ENCODE measurements at regions of chr18 and their contacts with region 1.

Region 1: DNA sequence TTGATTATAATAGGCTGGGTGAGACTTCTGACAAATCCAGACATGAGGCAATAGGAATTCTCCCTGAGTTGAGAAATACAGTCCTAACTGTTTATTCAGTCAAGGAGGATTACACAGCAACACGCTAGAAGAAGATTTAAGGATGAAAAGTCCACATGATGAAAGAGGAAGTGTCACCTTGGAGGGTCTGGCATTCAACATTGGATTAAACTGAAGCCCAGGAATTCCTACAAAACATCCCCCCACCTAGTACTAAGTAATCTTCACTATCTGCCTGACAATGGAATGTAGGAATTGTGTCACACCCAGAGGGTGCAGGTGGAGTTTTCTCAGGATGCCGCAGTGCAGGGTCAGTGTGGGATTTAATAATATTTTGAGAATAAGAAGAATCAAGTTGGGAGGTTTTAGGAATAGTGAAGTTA is 142.4 kb downstream of the SOCS6 start:
- H3K4me3 ChIP-seq: no peak overlapping the region
- H3K27ac ChIP-seq: no peak overlapping the region
- H3K4me1 ChIP-seq: no peaks in the 10 kb centered on the region
- CTCF ChIP-seq: no peak

Region 2: DNA sequence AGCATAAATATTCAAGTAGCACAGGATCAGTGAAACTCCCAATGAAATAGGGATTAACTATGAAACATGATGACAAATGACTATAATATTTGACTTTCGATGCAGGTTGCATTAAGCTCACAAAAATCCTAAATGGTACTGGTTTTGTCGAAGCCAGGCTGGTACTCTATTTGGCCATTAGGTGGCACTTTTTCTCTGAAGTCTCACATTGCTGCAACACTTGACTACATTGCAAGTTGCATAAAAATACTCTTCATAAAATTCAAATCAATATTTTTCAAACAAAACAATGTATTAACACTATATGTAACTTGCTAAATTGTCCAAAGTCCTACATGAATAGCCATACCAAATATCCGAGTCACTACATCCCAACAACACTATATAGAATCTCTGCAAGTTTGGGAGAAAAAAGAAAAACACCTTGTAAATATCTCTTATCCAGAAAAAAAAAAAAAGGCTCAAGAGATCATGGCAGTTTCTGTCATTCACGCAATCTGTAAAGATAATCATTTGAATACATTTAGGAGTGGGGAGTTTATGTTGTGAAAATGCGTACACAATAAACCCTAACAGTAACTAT is 235.3 kb before region 1 on chr18:
- CTCF ChIA-PET with region 1: interaction called, 108 read pairs
- POLR2A ChIA-PET with region 1: no interaction called
- H3K4me3 ChIP-seq: no peak overlapping the region
- H3K27ac ChIP-seq: no peak overlapping the region
- H3K4me1 ChIP-seq: no peaks in the 10 kb centered on the region
- CTCF ChIP-seq: peak; percentile 46; the same call in 1 of the 2 replicates

Region 3: GRCh38 chr18:70221156-70221914 is 209.9 kb before region 1 on chr18:
- CTCF ChIA-PET with region 1: interaction called, 12 read pairs
- POLR2A ChIA-PET with region 1: no interaction called
- H3K4me3 ChIP-seq: no peak overlapping the region
- H3K27ac ChIP-seq: no peak overlapping the region
- H3K4me1 ChIP-seq: no peaks in the 10 kb centered on the region
- CTCF ChIP-seq: no peak

Region 4: GRCh38 chr18:70284976-70285620 is 146.1 kb before region 1 on chr18:
- CTCF ChIA-PET with region 1: interaction called, 11 read pairs
- POLR2A ChIA-PET with region 1: no interaction called
- H3K4me3 ChIP-seq: no peak overlapping the region
- H3K27ac ChIP-seq: no peak overlapping the region
- H3K4me1 ChIP-seq: peaks cover 5% of the 10 kb centered on the region
- CTCF ChIP-seq: no peak

Region 5: GRCh38 chr18:70355620-70356385 is 75.4 kb before region 1 on chr18:
- CTCF ChIA-PET with region 1: interaction called, 10 read pairs
- POLR2A ChIA-PET with region 1: no interaction called
- H3K4me3 ChIP-seq: no peak overlapping the region
- H3K27ac ChIP-seq: no peak overlapping the region
- H3K4me1 ChIP-seq: no peaks in the 10 kb centered on the region
- CTCF ChIP-seq: no peak

Region 6: GRCh38 chr18:70414315-70414900 is 16.8 kb before region 1 on chr18:
- CTCF ChIA-PET with region 1: interaction called, 31 read pairs
- POLR2A ChIA-PET with region 1: interaction called, 3 read pairs
- H3K4me3 ChIP-seq: no peak overlapping the region
- H3K27ac ChIP-seq: no peak overlapping the region
- H3K4me1 ChIP-seq: no peaks in the 10 kb centered on the region; the same call in 1 of the 2 replicates
- CTCF ChIP-seq: no peak

Region 7: GRCh38 chr18:70454704-70455322 is 23.6 kb after region 1 on chr18:
- CTCF ChIA-PET with region 1: interaction called, 23 read pairs
- POLR2A ChIA-PET with region 1: no interaction called
- H3K4me3 ChIP-seq: no peak overlapping the region
- H3K27ac ChIP-seq: no peak overlapping the region
- H3K4me1 ChIP-seq: no peaks in the 10 kb centered on the region
- CTCF ChIP-seq: peak; percentile 56

Measured in HEK293 (cell line).